ENCODE measurements at regions of chr3 and their contacts with region 1.

Region 1: DNA sequence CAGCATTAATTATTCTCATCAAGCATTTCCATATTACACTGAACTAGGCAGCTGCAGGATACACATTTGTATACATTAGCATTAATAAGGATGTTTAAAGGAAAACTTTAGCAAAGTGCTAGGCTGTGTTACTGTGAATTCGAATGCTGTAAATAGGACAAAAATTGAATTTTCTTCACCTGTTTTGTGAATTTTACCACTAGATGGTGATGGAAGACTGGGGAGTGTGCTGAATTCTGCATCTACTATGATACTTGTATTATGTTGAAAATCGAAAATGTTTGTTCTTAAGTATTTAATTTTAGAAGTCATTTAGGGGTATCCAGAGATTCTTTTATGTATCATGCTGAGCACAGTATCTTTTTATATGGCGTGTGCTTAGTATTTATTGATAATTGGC is 12.3 kb upstream of the P2RY14 start:
- DNase-seq: peak; percentile 66
- ATAC-seq: peak; percentile 72
- H3K4me3 ChIP-seq: no peak overlapping the region
- H3K27ac ChIP-seq: no peak overlapping the region
- H3K4me1 ChIP-seq: no peaks in the 10 kb centered on the region
- H3K27me3 ChIP-seq: no peaks in the 10 kb centered on the region
- CTCF ChIP-seq: peak; percentile 87
- POLR2A ChIP-seq: no peak
- RAD21 ChIP-seq: peak; percentile 93

Region 2: GRCh38 chr3:151236316-151236715 is 54.4 kb before region 1 on chr3:
- CTCF ChIA-PET with region 1: no interaction called
- POLR2A ChIA-PET with region 1: no interaction called
- dilution Hi-C with region 1: no loop called
- in situ Hi-C with region 1: no loop called
- intact Hi-C with region 1: no loop called
- DNase-seq: peak; percentile 24
- ATAC-seq: peak; percentile 32; the same call in 1 of the 2 replicates
- H3K4me3 ChIP-seq: no peak overlapping the region
- H3K27ac ChIP-seq: no peak overlapping the region
- H3K4me1 ChIP-seq: peaks cover 2% of the 10 kb centered on the region; the same call in 1 of the 2 replicates
- H3K27me3 ChIP-seq: no peaks in the 10 kb centered on the region
- CTCF ChIP-seq: no peak
- POLR2A ChIP-seq: no peak
- RAD21 ChIP-seq: no peak

Region 3: DNA sequence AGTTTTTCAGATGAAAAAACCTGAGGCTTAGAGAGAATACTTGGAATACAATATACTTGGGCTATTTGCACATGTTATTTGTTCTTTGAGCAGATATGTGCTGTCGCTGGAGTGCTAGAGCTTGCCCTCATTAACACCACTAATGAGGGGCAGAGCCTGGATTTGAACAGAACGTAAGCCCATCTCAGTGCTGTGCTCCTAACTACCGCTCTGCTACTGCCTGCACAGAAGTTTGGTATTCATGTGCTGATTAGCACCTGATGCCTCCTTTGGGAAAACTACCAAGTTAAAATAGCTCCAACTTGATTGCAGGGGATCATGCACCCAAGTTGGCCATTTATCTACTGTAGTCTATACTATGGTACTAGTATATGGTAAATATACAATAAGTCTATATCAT is 22.3 kb after region 1 on chr3:
- CTCF ChIA-PET with region 1: no interaction called
- POLR2A ChIA-PET with region 1: no interaction called
- dilution Hi-C with region 1: no loop called
- in situ Hi-C with region 1: no loop called
- intact Hi-C with region 1: no loop called
- DNase-seq: no peak
- ATAC-seq: no peak
- H3K4me3 ChIP-seq: no peak overlapping the region
- H3K27ac ChIP-seq: no peak overlapping the region
- H3K4me1 ChIP-seq: peaks cover 2% of the 10 kb centered on the region
- H3K27me3 ChIP-seq: no peaks in the 10 kb centered on the region
- CTCF ChIP-seq: no peak
- POLR2A ChIP-seq: no peak
- RAD21 ChIP-seq: no peak

Region 4: GRCh38 chr3:151327571-151328198 is 37.0 kb after region 1 on chr3:
- CTCF ChIA-PET with region 1: interaction called, 5 read pairs
- POLR2A ChIA-PET with region 1: no interaction called
- dilution Hi-C with region 1: no loop called
- in situ Hi-C with region 1: no loop called
- intact Hi-C with region 1: loop called (anchors 1 kb)
- DNase-seq: peak; percentile 34
- ATAC-seq: peak; percentile 64
- H3K4me3 ChIP-seq: no peak overlapping the region
- H3K27ac ChIP-seq: no peak overlapping the region
- H3K4me1 ChIP-seq: peaks cover 2% of the 10 kb centered on the region; the same call in 1 of the 2 replicates
- H3K27me3 ChIP-seq: no peaks in the 10 kb centered on the region
- CTCF ChIP-seq: peak; percentile 66
- POLR2A ChIP-seq: no peak
- RAD21 ChIP-seq: peak; percentile 46

Region 5: GRCh38 chr3:151468284-151468917 is 177.7 kb after region 1 on chr3:
- CTCF ChIA-PET with region 1: no interaction called
- POLR2A ChIA-PET with region 1: no interaction called
- dilution Hi-C with region 1: no loop called
- in situ Hi-C with region 1: no loop called
- intact Hi-C with region 1: loop called (anchors 10 kb)
- DNase-seq: peak; percentile 62
- ATAC-seq: peak; percentile 83
- H3K4me3 ChIP-seq: no peak overlapping the region
- H3K27ac ChIP-seq: no peak overlapping the region
- H3K4me1 ChIP-seq: no peaks in the 10 kb centered on the region
- H3K27me3 ChIP-seq: no peaks in the 10 kb centered on the region; the same call in 1 of the 2 replicates
- CTCF ChIP-seq: peak; percentile 76
- POLR2A ChIP-seq: no peak
- RAD21 ChIP-seq: peak; percentile 68

Region 6: GRCh38 chr3:151580591-151580990 is 289.9 kb after region 1 on chr3:
- CTCF ChIA-PET with region 1: no interaction called
- POLR2A ChIA-PET with region 1: no interaction called
- dilution Hi-C with region 1: no loop called
- in situ Hi-C with region 1: no loop called
- intact Hi-C with region 1: no loop called
- DNase-seq: peak; percentile 73
- ATAC-seq: peak; percentile 72
- H3K4me3 ChIP-seq: no peak overlapping the region
- H3K27ac ChIP-seq: no peak overlapping the region
- H3K4me1 ChIP-seq: no peaks in the 10 kb centered on the region
- H3K27me3 ChIP-seq: no peaks in the 10 kb centered on the region
- CTCF ChIP-seq: no peak
- POLR2A ChIP-seq: no peak
- RAD21 ChIP-seq: no peak

Measured in IMR-90 (cell line).